ENCODE measurements at regions of chr1 and their contacts with region 1.

Region 1: DNA sequence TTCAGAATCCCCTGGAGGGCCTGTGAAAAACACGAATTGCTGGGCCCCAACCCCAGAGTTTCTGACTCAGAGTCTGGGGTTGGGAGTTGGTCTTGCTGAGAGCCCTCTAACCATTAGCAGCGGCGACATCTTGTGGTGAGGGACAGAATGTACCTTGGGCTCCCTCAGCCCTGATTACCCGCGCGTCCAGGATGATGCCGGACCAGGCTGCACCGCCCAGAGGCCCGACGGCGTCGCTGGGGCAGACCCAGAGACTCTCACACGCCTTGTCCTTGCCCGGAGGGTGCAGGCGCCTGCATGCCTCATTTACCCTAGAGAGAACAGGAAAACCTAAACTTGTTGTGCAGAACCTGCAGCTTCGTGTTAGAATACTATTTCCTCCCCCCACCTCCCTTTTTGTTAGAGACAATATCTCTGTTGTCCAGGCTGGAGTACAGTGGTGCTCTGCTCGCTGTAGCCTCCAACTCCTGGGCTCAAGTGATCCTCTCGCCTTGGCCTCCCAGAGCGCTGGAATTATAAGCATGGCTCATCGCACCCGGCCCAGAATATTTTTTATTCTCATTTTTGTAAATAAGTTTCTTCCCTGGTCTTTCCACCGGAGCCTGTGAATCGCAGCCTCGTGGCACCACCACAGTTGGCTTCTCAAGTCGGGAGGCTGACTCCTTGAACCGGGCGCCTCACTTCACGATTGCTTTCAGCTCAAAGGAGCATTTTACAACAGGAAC is 22.2 kb upstream of the RD3 start:
- DNase-seq: peak; percentile 93
- H3K4me3 ChIP-seq: no peak overlapping the region; a peak in 1 of 4 replicates
- H3K27ac ChIP-seq: no peak overlapping the region
- H3K4me1 ChIP-seq: peaks cover 0 to 6% of the 10 kb centered on the region in 2 experiments; a peak in 1 of 4 replicates
- H3K27me3 ChIP-seq: no peaks in the 10 kb centered on the region
- CTCF ChIP-seq: peak; percentile 78
- EP300 ChIP-seq: no peak
- RAD21 ChIP-seq: peak; percentile 95

Region 2: DNA sequence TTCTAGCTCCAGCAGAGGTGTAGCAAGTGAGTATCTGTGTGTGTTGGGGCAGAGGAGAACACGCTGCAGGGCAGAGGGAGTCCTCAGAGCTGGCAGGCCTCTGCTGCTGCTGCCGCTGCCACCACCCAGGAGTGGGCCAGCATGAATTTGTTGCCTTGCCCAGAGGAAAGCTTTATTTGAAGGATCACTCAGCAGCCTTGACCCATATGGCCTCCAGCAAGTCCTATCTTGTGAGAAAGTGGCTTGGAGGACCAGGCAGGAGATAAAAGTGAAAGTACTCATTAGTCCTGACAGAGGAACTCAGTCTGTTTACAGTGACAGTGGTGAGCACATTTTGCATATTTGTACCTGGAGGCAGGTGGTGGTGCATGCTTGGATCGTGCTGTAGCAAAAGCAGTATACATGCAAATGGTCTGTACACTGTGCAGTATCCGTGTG is 184.4 kb before region 1 on chr1:
- CTCF ChIA-PET with region 1: interaction called, 66 read pairs
- POLR2A ChIA-PET with region 1: no interaction called
- DNase-seq: no peak
- H3K4me3 ChIP-seq: no peak overlapping the region
- H3K27ac ChIP-seq: no peak overlapping the region
- H3K4me1 ChIP-seq: peaks cover 0 to 47% of the 10 kb centered on the region in 2 experiments; a peak in 3 of 4 replicates
- H3K27me3 ChIP-seq: no peaks in the 10 kb centered on the region
- CTCF ChIP-seq: no peak
- EP300 ChIP-seq: no peak
- RAD21 ChIP-seq: no peak

Region 3: GRCh38 chr1:211476200-211476849 is 37.9 kb before region 1 on chr1:
- CTCF ChIA-PET with region 1: interaction called, 181 read pairs
- POLR2A ChIA-PET with region 1: no interaction called
- DNase-seq: peak; percentile 76
- H3K4me3 ChIP-seq: no peak overlapping the region
- H3K27ac ChIP-seq: no peak overlapping the region
- H3K4me1 ChIP-seq: peaks cover 0 to 4% of the 10 kb centered on the region in 2 experiments; a peak in 2 of 4 replicates
- H3K27me3 ChIP-seq: no peaks in the 10 kb centered on the region
- CTCF ChIP-seq: peak; percentile 96
- EP300 ChIP-seq: no peak
- RAD21 ChIP-seq: peak; percentile 64

Region 4: GRCh38 chr1:211492511-211493132 is 21.6 kb before region 1 on chr1:
- CTCF ChIA-PET with region 1: interaction called, 192 read pairs
- POLR2A ChIA-PET with region 1: interaction called, 3 read pairs
- DNase-seq: peak; percentile 66
- H3K4me3 ChIP-seq: no peak overlapping the region
- H3K27ac ChIP-seq: peak overlapping the region in 1 of 2 experiments; percentile 98; a peak in 2 of 4 replicates
- H3K4me1 ChIP-seq: peaks cover 0 to 59% of the 10 kb centered on the region in 2 experiments; a peak in 2 of 4 replicates
- H3K27me3 ChIP-seq: no peaks in the 10 kb centered on the region
- CTCF ChIP-seq: no peak
- EP300 ChIP-seq: peak in 1 of 2 experiments; percentile 69; a peak in 2 of 4 replicates
- RAD21 ChIP-seq: no peak

Region 5: GRCh38 chr1:211548321-211549091 is 34.3 kb after region 1 on chr1:
- CTCF ChIA-PET with region 1: interaction called, 10 read pairs
- POLR2A ChIA-PET with region 1: no interaction called
- DNase-seq: no peak
- H3K4me3 ChIP-seq: no peak overlapping the region
- H3K27ac ChIP-seq: no peak overlapping the region
- H3K4me1 ChIP-seq: 0 out of 4 replicates have a peak, but pooled peaks cover 0 to 6% of the 10 kb centered on the region in 2 experiments
- H3K27me3 ChIP-seq: no peaks in the 10 kb centered on the region
- CTCF ChIP-seq: no peak
- EP300 ChIP-seq: no peak
- RAD21 ChIP-seq: no peak

Region 6: GRCh38 chr1:211643324-211644212 is 129.4 kb after region 1 on chr1:
- CTCF ChIA-PET with region 1: interaction called, 209 read pairs
- POLR2A ChIA-PET with region 1: no interaction called
- DNase-seq: peak; percentile 78
- H3K4me3 ChIP-seq: no peak overlapping the region
- H3K27ac ChIP-seq: peak overlapping the region; percentile 36 to 47; a peak in 3 of 4 replicates
- H3K4me1 ChIP-seq: peaks cover 13 to 19% of the 10 kb centered on the region in 2 experiments; a peak in 3 of 4 replicates
- H3K27me3 ChIP-seq: no peaks in the 10 kb centered on the region
- CTCF ChIP-seq: no peak
- EP300 ChIP-seq: no peak
- RAD21 ChIP-seq: no peak

Region 7: DNA sequence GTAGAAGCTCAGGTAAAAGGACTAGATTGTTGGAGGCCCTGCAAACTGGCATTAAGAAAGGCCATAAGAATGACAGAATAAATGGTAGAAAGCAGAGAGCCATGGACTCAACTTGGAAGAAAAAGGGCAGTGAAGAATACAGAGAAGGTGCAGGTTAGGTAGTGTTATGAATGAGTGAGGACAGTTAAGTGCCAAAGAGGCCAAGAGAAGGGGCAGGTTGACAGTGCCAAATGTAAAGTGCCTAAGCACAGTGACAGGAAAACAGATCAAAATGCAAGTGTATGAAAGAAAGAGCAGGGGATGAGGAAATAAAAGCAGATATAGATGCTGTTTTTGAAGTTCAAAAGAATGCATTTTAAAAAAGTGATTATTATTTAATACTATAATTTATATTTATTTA is 477.5 kb after region 1 on chr1:
- CTCF ChIA-PET with region 1: no interaction called
- POLR2A ChIA-PET with region 1: no interaction called
- DNase-seq: no peak
- H3K4me3 ChIP-seq: no peak overlapping the region
- H3K27ac ChIP-seq: no peak overlapping the region
- H3K4me1 ChIP-seq: no peaks in the 10 kb centered on the region
- H3K27me3 ChIP-seq: no peaks in the 10 kb centered on the region
- CTCF ChIP-seq: no peak
- EP300 ChIP-seq: no peak
- RAD21 ChIP-seq: no peak

Measured in SK-N-SH (cell line).